ENCODE measurements at regions of chr6 and their contacts with region 1.

Region 1: DNA sequence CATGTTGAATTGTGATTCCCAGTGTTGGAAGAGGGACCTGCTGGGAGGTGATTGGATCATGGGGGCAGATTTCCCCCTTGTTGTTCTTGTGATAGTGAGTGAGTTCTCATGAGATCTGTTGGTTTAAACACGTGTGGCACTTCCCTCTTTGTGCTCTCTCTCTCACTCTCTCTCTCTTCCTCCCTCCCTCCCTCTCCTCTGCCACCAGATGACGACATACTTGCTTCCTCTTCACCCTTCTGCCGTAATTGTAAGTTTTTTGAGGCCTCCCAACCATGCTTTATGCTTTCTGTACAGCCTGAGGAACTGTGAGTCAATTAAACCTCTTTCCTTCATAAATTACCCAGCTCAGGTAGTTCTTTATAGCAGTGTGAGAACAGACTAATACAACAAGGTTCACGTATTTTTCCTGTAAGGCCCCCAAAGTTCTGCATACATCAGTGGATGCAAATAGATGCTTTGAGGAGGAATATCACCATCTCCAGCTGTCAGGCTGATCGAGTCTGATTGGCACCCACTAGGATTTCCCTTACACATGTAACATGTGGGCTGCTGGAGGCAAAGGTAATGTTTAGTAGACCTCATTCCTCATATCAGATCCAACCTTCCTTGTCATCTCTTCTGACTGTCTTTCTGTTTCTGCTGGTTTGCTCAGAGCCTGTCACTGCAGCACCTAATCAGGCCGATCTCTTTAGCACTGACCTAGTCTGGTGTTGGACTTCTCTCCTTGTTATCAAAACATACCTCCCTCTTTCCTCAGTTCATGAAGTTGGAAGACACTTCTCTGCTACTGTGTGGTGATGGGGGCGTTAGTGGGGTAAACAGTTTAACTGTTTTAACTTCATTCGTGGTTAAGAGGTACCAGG is 54.3 kb upstream of the BACH2 start:
- DNase-seq: peak; percentile 83
- H3K4me3 Mint-ChIP-seq: peak overlapping the region; percentile 42
- H3K27ac Mint-ChIP-seq: peak overlapping the region; percentile 90
- H3K4me1 Mint-ChIP-seq: peaks cover 37% of the 10 kb centered on the region
- H3K27me3 Mint-ChIP-seq: peaks cover 5% of the 10 kb centered on the region

Region 2: GRCh38 chr6:90296346-90297114 is 54.4 kb before region 1 on chr6 and contains the start of gene BACH2:
- intact Hi-C with region 1: loop called (anchors 1 kb)
- DNase-seq: peak; percentile 97
- H3K4me3 Mint-ChIP-seq: peak within 1 kb of the TSS; percentile 94
- H3K27ac Mint-ChIP-seq: peak within 1 kb of the TSS; percentile 95
- H3K4me1 Mint-ChIP-seq: peaks cover 40% of the 10 kb centered on the region
- H3K27me3 Mint-ChIP-seq: peaks cover 23% of the 10 kb centered on the region
- total RNA-seq, gene BACH2: 69.0 and 69.2 TPM in 2 replicates

Region 3: GRCh38 chr6:90319979-90320685 is 30.8 kb before region 1 on chr6:
- intact Hi-C with region 1: loop called (anchors 1 kb)
- DNase-seq: no peak
- H3K4me3 Mint-ChIP-seq: no peak overlapping the region
- H3K27ac Mint-ChIP-seq: peak overlapping the region; percentile 77
- H3K4me1 Mint-ChIP-seq: peaks cover 15% of the 10 kb centered on the region
- H3K27me3 Mint-ChIP-seq: peaks cover 2% of the 10 kb centered on the region

Region 4: GRCh38 chr6:90370493-90370959 is 19.6 kb after region 1 on chr6:
- intact Hi-C with region 1: loop called (anchors 1 kb)
- DNase-seq: peak; percentile 66
- H3K4me3 Mint-ChIP-seq: no peak overlapping the region
- H3K27ac Mint-ChIP-seq: peak overlapping the region; percentile 10
- H3K4me1 Mint-ChIP-seq: peaks cover 16% of the 10 kb centered on the region
- H3K27me3 Mint-ChIP-seq: peaks cover 3% of the 10 kb centered on the region

Measured in activated CD4-positive, alpha-beta T cell treated with anti-CD3 and anti-CD28 coated beads, Interleukin-2, amount 10 ng/mL, durations not matched to agents 24 days and 14 days (primary cell).